A549 (cell line): ENCODE measurements at regions of chr2 and their contacts with region 1.

Region 1: DNA sequence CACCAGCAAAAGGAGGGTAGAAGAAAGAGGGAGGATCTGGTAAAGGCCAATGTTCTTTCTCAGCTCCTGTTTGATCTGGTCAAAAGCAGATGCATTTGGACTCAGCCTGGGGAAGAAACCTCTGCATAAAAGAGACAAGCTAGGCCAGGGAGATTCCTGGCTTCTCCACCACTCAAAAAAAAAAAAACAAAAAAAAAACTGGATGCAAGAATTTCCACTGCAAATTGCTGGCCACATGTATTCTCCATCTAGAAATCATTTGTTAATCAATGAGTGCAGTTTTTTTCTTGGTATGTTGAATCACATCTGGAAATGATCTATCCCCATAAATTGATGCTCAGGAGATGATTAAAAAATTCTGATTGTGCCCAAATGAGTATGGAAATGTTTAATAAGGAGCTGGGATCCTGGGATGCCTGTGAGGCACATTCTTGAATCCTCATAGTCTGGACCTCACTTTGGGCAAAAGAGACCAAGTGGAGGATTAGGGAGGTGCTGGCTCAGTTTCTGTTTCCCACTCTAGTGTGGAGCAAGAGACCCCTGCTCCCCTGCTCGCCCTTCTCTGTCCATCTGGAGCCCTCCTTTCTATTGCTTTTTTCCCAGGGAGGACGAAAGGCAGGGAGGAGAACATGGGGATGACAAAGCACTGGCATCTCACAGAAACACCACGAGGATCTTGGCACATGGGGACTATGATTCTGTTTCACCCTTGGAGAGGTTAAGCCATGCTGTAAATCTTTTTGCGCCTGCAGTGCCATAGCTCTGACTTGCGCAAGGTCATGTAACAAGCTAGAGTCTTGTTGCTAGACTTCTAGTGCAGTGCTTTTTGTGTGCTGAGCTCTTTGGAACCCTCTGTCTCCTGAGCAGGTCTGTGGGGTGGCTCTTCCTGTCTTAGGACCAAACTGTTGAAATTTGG is 57.6 kb downstream of the APOB start:
- DNase-seq: no peak
- ATAC-seq: no peak
- H3K4me3 ChIP-seq: no peak overlapping the region
- H3K27ac ChIP-seq: no peak overlapping the region
- H3K4me1 ChIP-seq: no peaks in the 10 kb centered on the region
- CTCF ChIP-seq: no peak
- EP300 ChIP-seq: no peak
- POLR2A ChIP-seq: no peak
- RAD21 ChIP-seq: no peak

Region 2: GRCh38 chr2:20970068-20970467 is 16.2 kb before region 1 on chr2:
- CTCF ChIA-PET with region 1: interaction called, 14 read pairs
- POLR2A ChIA-PET with region 1: no interaction called
- DNase-seq: no peak
- ATAC-seq: no peak
- H3K4me3 ChIP-seq: no peak overlapping the region
- H3K27ac ChIP-seq: no peak overlapping the region
- H3K4me1 ChIP-seq: no peaks in the 10 kb centered on the region
- CTCF ChIP-seq: no peak
- EP300 ChIP-seq: no peak
- POLR2A ChIP-seq: no peak
- RAD21 ChIP-seq: no peak

Region 3: GRCh38 chr2:20999906-21000645 is 13.8 kb after region 1 on chr2:
- CTCF ChIA-PET with region 1: no interaction called
- POLR2A ChIA-PET with region 1: no interaction called
- DNase-seq: peak in 1 of 2 experiments; percentile 12
- ATAC-seq: peak in 1 of 2 experiments; percentile 59; a peak in 4 of 6 replicates
- H3K4me3 ChIP-seq: no peak overlapping the region
- H3K27ac ChIP-seq: no peak overlapping the region
- H3K4me1 ChIP-seq: no peaks in the 10 kb centered on the region
- CTCF ChIP-seq: no peak
- EP300 ChIP-seq: no peak
- POLR2A ChIP-seq: no peak
- RAD21 ChIP-seq: no peak